ENCODE measurements at regions of chr7 and their contacts with region 1.

Region 1: GRCh38 chr7:44973610-44974401 is 5.0 kb downstream of the MYO1G start:
- DNase-seq: peak; percentile 49 to 77 (median 64)
- ATAC-seq: peak; percentile 67
- H3K4me3 ChIP-seq: no peak overlapping the region
- H3K27ac ChIP-seq: no peak overlapping the region
- H3K4me1 ChIP-seq: peaks cover 5% of the 10 kb centered on the region
- H3K27me3 ChIP-seq: no peaks in the 10 kb centered on the region
- CTCF ChIP-seq: peak; percentile 26 to 69 (median 46)
- POLR2A ChIP-seq: no peak

Region 2: GRCh38 chr7:45136106-45137060 is 162.6 kb after region 1 on chr7:
- intact Hi-C with region 1: loop called (anchors 5 kb)
- DNase-seq: peak; percentile 52 to 63 (median 60)
- ATAC-seq: peak; percentile 88
- H3K4me3 ChIP-seq: no peak overlapping the region
- H3K27ac ChIP-seq: no peak overlapping the region
- H3K4me1 ChIP-seq: no peaks in the 10 kb centered on the region
- H3K27me3 ChIP-seq: no peaks in the 10 kb centered on the region
- CTCF ChIP-seq: peak; percentile 66 to 93 (median 85)
- POLR2A ChIP-seq: no peak

Measured in body of pancreas (tissue), 4 donors.